HCT116 (cell line): ENCODE measurements at regions of chr14 and their contacts with region 1.

Region 1: GRCh38 chr14:51283402-51284085 is 43.5 kb downstream of the TMX1 start:
- DNase-seq: peak; percentile 36
- ATAC-seq: peak; percentile 81
- H3K4me3 ChIP-seq: no peak overlapping the region
- H3K27ac ChIP-seq: no peak overlapping the region
- H3K4me1 ChIP-seq: no peaks in the 10 kb centered on the region
- H3K27me3 ChIP-seq: no peaks in the 10 kb centered on the region
- CTCF ChIP-seq: peak; percentile 55 to 84 (median 76)
- POLR2A ChIP-seq: no peak
- RAD21 ChIP-seq: peak; percentile 78

Region 2: DNA sequence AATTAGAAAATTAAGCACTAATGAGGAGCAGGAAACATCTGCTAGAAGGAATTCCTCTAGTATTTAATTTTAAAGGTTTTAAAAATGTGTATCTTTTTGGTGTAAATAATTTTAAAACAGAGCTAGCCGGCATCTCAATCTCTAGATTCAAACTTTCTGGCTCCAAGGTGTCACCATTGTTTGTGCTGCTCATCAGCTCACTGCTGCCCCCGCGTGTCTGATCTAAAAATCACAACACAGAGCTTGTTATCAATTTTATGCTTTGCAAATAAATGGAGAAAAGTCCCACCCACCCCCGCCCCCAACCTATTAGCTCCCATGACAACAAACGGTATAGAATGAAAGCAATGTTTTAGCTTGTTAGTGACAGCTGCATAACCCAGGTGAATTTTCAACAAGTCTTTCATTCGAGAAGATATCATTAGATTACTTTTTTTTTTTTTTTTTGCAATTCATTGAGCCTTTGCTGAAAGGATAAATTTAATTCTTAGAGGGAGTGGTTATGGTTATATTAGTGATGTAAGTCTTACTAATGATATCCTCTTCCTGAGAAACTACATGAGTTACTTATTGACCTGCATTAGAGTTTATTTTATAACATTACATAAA is 423.0 kb before region 1 on chr14:
- CTCF ChIA-PET with region 1: no interaction called
- POLR2A ChIA-PET with region 1: no interaction called
- RAD21 ChIA-PET with region 1: no interaction called
- intact Hi-C with region 1: no loop called
- DNase-seq: peak; percentile 71
- ATAC-seq: peak; percentile 73
- H3K4me3 ChIP-seq: peak overlapping the region; percentile 32 to 51
- H3K27ac ChIP-seq: no peak overlapping the region
- H3K4me1 ChIP-seq: peaks cover 7 to 12% of the 10 kb centered on the region in 2 experiments
- H3K27me3 ChIP-seq: peaks cover 5% of the 10 kb centered on the region; the same call in 1 of the 2 replicates
- CTCF ChIP-seq: peak; percentile 55 to 68 (median 58); a peak in 5 of 6 replicates
- POLR2A ChIP-seq: no peak
- RAD21 ChIP-seq: peak; percentile 67

Region 3: DNA sequence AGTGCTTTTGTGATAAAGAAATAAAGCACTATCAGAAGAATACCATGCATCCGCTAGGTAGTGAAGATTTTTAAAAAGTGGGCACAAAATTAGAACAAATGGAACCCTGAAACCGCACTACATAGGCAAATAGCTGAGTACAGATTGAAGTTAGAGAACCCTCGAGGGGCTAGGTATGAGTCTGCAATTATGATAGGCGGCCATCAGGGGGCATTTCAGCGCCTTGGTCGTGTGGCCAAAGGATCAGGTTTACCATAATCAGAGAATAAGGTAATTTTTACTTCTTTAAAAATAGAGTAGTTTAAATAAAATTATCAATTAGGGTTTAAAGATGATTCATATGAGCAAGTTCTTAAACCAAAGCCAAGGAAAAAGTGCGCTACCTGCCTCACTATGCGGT is 86.3 kb after region 1 on chr14:
- CTCF ChIA-PET with region 1: no interaction called
- POLR2A ChIA-PET with region 1: no interaction called
- RAD21 ChIA-PET with region 1: no interaction called
- intact Hi-C with region 1: loop called (anchors 1 kb)
- DNase-seq: peak; percentile 18
- ATAC-seq: peak; percentile 79
- H3K4me3 ChIP-seq: no peak overlapping the region
- H3K27ac ChIP-seq: no peak overlapping the region
- H3K4me1 ChIP-seq: no peaks in the 10 kb centered on the region
- H3K27me3 ChIP-seq: no peaks in the 10 kb centered on the region
- CTCF ChIP-seq: peak; percentile 65 to 72 (median 70)
- POLR2A ChIP-seq: no peak
- RAD21 ChIP-seq: peak; percentile 78

Region 4: DNA sequence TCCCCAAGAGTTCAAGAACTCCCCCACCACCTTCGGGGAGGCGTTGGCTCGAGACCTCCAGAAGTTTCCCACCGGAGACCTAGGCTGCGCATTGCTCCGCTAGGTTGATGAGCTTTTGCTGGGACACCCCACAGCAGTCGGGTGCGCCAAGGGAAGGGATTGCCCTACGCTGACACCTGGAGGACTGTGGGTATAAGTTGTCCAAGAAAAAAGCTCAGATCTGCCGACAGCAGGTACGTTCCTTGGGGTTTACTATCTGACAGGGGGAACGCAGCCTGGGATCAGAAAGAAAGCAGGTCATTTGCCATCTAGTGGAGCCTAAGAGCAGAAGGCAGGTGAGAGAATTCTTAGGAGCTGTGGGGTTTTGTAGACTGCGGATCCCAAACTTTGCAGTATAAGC is 467.0 kb after region 1 on chr14:
- CTCF ChIA-PET with region 1: interaction called, 12 read pairs
- POLR2A ChIA-PET with region 1: no interaction called
- RAD21 ChIA-PET with region 1: interaction called in 1 of 2 experiments, 3 read pairs
- intact Hi-C with region 1: no loop called
- DNase-seq: peak; percentile 19
- ATAC-seq: no peak
- H3K4me3 ChIP-seq: no peak overlapping the region
- H3K27ac ChIP-seq: no peak overlapping the region
- H3K4me1 ChIP-seq: peaks cover 0 to 9% of the 10 kb centered on the region in 2 experiments; a peak in 1 of 4 replicates
- H3K27me3 ChIP-seq: no peaks in the 10 kb centered on the region
- CTCF ChIP-seq: peak; percentile 17 to 27 (median 25); a peak in 4 of 6 replicates
- POLR2A ChIP-seq: no peak
- RAD21 ChIP-seq: peak; percentile 53

Region 5: GRCh38 chr14:51979088-51979709 is 695.7 kb after region 1 on chr14:
- CTCF ChIA-PET with region 1: interaction called, 4 read pairs
- POLR2A ChIA-PET with region 1: no interaction called
- RAD21 ChIA-PET with region 1: no interaction called
- intact Hi-C with region 1: loop called (anchors 2 kb)
- DNase-seq: peak; percentile 72
- ATAC-seq: peak; percentile 98
- H3K4me3 ChIP-seq: no peak overlapping the region
- H3K27ac ChIP-seq: no peak overlapping the region
- H3K4me1 ChIP-seq: peaks cover 0 to 6% of the 10 kb centered on the region in 2 experiments; a peak in 1 of 4 replicates
- H3K27me3 ChIP-seq: no peaks in the 10 kb centered on the region
- CTCF ChIP-seq: peak; percentile 73 to 95 (median 87)
- POLR2A ChIP-seq: no peak
- RAD21 ChIP-seq: peak; percentile 78

Region 6: GRCh38 chr14:52131640-52132320 is 848.2 kb after region 1 on chr14:
- CTCF ChIA-PET with region 1: no interaction called
- POLR2A ChIA-PET with region 1: no interaction called
- RAD21 ChIA-PET with region 1: no interaction called
- intact Hi-C with region 1: loop called (anchors 10 kb)
- DNase-seq: peak; percentile 87
- ATAC-seq: peak; percentile 98
- H3K4me3 ChIP-seq: no peak overlapping the region
- H3K27ac ChIP-seq: no peak overlapping the region
- H3K4me1 ChIP-seq: peaks cover 0 to 5% of the 10 kb centered on the region in 2 experiments; a peak in 1 of 4 replicates
- H3K27me3 ChIP-seq: no peaks in the 10 kb centered on the region
- CTCF ChIP-seq: peak; percentile 67 to 73 (median 71)
- POLR2A ChIP-seq: no peak
- RAD21 ChIP-seq: peak; percentile 77